ENCODE measurements at regions of chr12 and their contacts with region 1.

Region 1: GRCh38 chr12:53251477-53252348 is 16.4 kb upstream of the ESPL1 start:
- DNase-seq: peak; percentile 67 to 78 (median 71)
- H3K4me3 ChIP-seq: peak overlapping the region; percentile 73 to 92
- H3K4me3 Mint-ChIP-seq: peak overlapping the region; percentile 96 to 100 (median 98)
- H3K27ac ChIP-seq: peak overlapping the region; percentile 83
- H3K27ac Mint-ChIP-seq: peak overlapping the region; percentile 96 to 99 (median 98)
- H3K4me1 ChIP-seq: peaks cover 46% of the 10 kb centered on the region
- H3K4me1 Mint-ChIP-seq: peaks cover 23 to 52% (median 41%) of the 10 kb centered on the region in 4 donors
- H3K27me3 ChIP-seq: no peaks in the 10 kb centered on the region
- H3K27me3 Mint-ChIP-seq: no peaks in the 10 kb centered on the region

Region 2: GRCh38 chr12:53231826-53232645 is 19.7 kb before region 1 on chr12 and contains the start of gene RARG:
- CTCF ChIA-PET with region 1: interaction called, 6 read pairs
- POLR2A ChIA-PET with region 1: interaction called, 24 read pairs
- intact Hi-C with region 1: loop called (anchors 1 kb)
- DNase-seq: peak; percentile 64 to 83 (median 67)
- H3K4me3 ChIP-seq: peak within 1 kb of the TSS; percentile 63 to 90
- H3K4me3 Mint-ChIP-seq: peak within 1 kb of the TSS; percentile 87 to 98 (median 93)
- H3K27ac ChIP-seq: peak within 1 kb of the TSS; percentile 71
- H3K27ac Mint-ChIP-seq: peak within 1 kb of the TSS; percentile 89 to 98 (median 95)
- H3K4me1 ChIP-seq: peaks cover 92% of the 10 kb centered on the region
- H3K4me1 Mint-ChIP-seq: peaks cover 55 to 89% (median 74%) of the 10 kb centered on the region in 4 donors
- H3K27me3 ChIP-seq: no peaks in the 10 kb centered on the region
- H3K27me3 Mint-ChIP-seq: no peaks in the 10 kb centered on the region
- total RNA-seq, gene RARG: 84.7 to 86.0 TPM

Region 3: GRCh38 chr12:53267999-53268647 is 16.4 kb after region 1 on chr12 and contains the start of gene ESPL1:
- CTCF ChIA-PET with region 1: interaction called, 36 read pairs
- POLR2A ChIA-PET with region 1: interaction called, 38 read pairs
- intact Hi-C with region 1: no loop called
- DNase-seq: peak; percentile 78 to 82 (median 81)
- H3K4me3 ChIP-seq: peak within 1 kb of the TSS; percentile 76 to 91
- H3K4me3 Mint-ChIP-seq: peak within 1 kb of the TSS; percentile 93 to 100 (median 96)
- H3K27ac ChIP-seq: peak within 1 kb of the TSS; percentile 71
- H3K27ac Mint-ChIP-seq: peak within 1 kb of the TSS; percentile 92 to 97 (median 95)
- H3K4me1 ChIP-seq: peaks cover 10% of the 10 kb centered on the region
- H3K4me1 Mint-ChIP-seq: peaks cover 11 to 29% (median 19%) of the 10 kb centered on the region in 4 donors
- H3K27me3 ChIP-seq: no peaks in the 10 kb centered on the region
- H3K27me3 Mint-ChIP-seq: no peaks in the 10 kb centered on the region
- total RNA-seq, gene ESPL1: 0.20 to 0.55 TPM

Region 4: DNA sequence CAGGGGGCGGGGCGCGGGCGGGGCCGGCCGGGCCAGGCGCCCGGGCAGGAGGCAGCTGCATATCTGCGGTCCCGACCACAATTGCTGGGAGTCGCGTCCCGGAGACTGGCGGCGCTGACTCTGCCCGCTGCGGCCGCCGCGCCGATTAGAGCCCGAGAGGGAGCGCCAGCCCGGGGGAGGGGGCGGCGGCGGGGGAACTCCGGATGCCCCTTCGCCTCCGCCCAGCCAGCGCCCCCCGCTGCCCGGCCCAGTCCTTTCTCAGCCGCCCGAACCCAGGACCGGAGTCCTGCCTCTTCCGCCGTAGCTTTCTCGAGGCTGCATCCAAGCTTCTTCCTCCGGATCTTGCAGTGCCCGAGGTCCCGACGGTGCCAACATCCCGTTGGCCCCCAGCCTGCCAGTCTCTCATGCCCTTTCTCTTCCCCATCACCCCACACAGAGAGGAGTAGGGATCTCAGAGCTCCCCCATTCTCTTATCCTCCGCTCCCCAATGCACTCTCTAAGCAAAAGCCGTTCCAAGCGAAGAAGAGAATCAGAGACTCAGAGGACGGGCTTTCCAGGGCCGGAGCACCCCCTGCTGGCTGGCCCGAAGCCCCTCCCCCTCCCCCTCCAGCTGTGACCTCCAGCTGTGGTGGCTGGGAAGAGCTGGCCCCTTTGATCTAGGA is 93.2 kb after region 1 on chr12:
- CTCF ChIA-PET with region 1: interaction called, 3 read pairs
- POLR2A ChIA-PET with region 1: no interaction called
- intact Hi-C with region 1: loop called (anchors 1 kb)
- DNase-seq: peak; percentile 62 to 66 (median 65)
- H3K4me3 ChIP-seq: peak overlapping the region in 1 of 2 donors; percentile 73
- H3K4me3 Mint-ChIP-seq: peak overlapping the region; percentile 94 to 99 (median 98)
- H3K27ac ChIP-seq: peak overlapping the region; percentile 44
- H3K27ac Mint-ChIP-seq: peak overlapping the region; percentile 68 to 97 (median 94)
- H3K4me1 ChIP-seq: peaks cover 7% of the 10 kb centered on the region
- H3K4me1 Mint-ChIP-seq: peaks cover 11 to 18% (median 14%) of the 10 kb centered on the region in 4 donors
- H3K27me3 ChIP-seq: no peaks in the 10 kb centered on the region
- H3K27me3 Mint-ChIP-seq: no peaks in the 10 kb centered on the region

Measured in CD4-positive, alpha-beta memory T cell (primary cell).